ENCODE measurements at regions of chr19 and their contacts with region 1.

Region 1: GRCh38 chr19:10695401-10696398 is 5.5 kb upstream of the QTRT1 start:
- DNase-seq: peak; percentile 93
- ATAC-seq: peak; percentile 99
- H3K4me3 Mint-ChIP-seq: peak overlapping the region; percentile 62
- H3K27ac Mint-ChIP-seq: no peak overlapping the region
- H3K4me1 Mint-ChIP-seq: peaks cover 17% of the 10 kb centered on the region
- H3K27me3 Mint-ChIP-seq: peaks cover 4% of the 10 kb centered on the region
- CTCF ChIP-seq: no peak

Region 2: GRCh38 chr19:10433131-10433536 is 262.6 kb before region 1 on chr19:
- CTCF ChIA-PET with region 1: no interaction called
- POLR2A ChIA-PET with region 1: no interaction called
- intact Hi-C with region 1: no loop called
- DNase-seq: peak; percentile 55
- ATAC-seq: peak; percentile 9
- H3K4me3 Mint-ChIP-seq: peak overlapping the region; percentile 38
- H3K27ac Mint-ChIP-seq: peak overlapping the region; percentile 53
- H3K4me1 Mint-ChIP-seq: peaks cover 47% of the 10 kb centered on the region
- H3K27me3 Mint-ChIP-seq: peaks cover 29% of the 10 kb centered on the region
- CTCF ChIP-seq: no peak

Region 3: DNA sequence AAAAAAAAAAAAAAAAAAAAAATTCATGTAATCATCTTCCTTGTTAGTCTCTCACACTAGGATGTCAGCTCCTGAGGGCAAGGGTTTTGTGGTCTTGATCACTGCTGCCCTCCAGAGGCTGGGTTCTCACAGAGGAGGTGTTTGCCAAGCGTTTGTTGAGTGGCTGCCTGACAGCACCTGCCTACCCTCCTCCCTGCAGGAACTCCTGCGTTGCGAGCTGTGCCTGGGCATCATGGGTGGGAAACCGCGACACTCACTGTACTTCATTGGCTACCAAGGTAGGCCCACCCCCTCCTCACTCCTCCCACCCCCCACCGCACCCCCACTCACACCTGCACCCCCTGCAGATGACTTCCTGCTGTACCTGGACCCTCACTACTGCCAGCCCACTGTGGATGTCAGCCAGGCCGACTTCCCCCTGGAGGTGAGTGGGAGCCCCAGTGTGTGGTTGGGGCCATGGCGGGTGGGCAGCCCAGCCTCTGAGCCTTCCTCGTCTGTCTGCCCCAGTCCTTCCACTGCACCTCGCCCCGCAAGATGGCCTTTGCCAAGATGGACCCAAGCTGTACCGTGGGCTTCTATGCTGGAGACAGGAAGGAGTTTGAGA is 143.9 kb before region 1 on chr19:
- CTCF ChIA-PET with region 1: interaction called, 18 read pairs
- POLR2A ChIA-PET with region 1: no interaction called
- intact Hi-C with region 1: no loop called
- DNase-seq: peak; percentile 73
- ATAC-seq: peak; percentile 14
- H3K4me3 Mint-ChIP-seq: no peak overlapping the region
- H3K27ac Mint-ChIP-seq: peak overlapping the region; percentile 92
- H3K4me1 Mint-ChIP-seq: peaks cover 54% of the 10 kb centered on the region
- H3K27me3 Mint-ChIP-seq: no peaks in the 10 kb centered on the region
- CTCF ChIP-seq: no peak

Region 4: GRCh38 chr19:10644260-10645007 is 51.3 kb before region 1 on chr19:
- CTCF ChIA-PET with region 1: interaction called, 57 read pairs
- POLR2A ChIA-PET with region 1: interaction called, 5 read pairs
- intact Hi-C with region 1: no loop called
- DNase-seq: peak; percentile 90
- ATAC-seq: peak; percentile 90
- H3K4me3 Mint-ChIP-seq: no peak overlapping the region
- H3K27ac Mint-ChIP-seq: peak overlapping the region; percentile 90
- H3K4me1 Mint-ChIP-seq: peaks cover 47% of the 10 kb centered on the region
- H3K27me3 Mint-ChIP-seq: no peaks in the 10 kb centered on the region
- CTCF ChIP-seq: peak; percentile 92

Region 5: DNA sequence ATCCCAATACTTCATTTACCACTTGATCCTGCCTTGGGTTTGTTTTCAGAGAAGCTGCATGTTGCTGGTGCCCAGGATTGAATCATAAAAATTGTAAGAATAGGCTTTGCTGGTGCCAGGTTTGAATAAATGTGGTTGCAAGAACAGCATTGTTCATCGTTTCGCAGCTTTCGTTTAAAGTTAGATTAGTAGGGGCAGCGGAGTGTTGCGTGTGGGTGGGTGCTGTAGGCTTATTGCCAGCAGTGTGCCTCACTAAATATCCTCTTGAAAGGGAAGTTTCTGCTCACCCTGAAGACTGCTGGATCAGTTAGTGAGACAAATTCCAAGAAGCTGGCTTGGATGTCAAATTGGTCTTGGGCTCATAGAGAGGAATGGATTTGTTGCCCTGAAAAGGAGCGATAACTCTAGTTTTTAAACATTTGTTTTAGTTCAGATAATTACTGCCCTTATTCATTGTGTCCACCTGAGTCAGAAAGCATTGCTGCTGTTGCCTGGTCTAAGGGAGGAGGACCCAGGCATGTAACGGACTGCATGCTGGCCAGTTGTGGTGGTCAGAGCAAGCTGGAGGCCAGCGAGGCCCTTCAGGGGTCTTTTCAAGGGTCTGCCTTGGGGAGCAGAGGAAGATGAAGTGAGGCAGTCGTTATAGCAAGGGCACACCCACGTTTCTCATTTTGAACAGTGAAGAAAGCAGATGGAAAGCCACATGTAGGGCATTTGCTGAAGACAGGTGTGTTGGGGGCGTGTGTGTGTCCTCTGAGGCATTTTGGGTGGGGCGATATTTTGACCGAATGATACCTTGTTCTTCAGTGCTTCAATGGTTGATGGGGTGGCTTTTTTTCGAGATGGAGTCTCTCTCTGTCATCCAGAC is 33.1 kb before region 1 on chr19:
- CTCF ChIA-PET with region 1: interaction called, 14 read pairs
- POLR2A ChIA-PET with region 1: interaction called, 26 read pairs
- intact Hi-C with region 1: no loop called
- DNase-seq: peak; percentile 68
- ATAC-seq: peak; percentile 71
- H3K4me3 Mint-ChIP-seq: peak overlapping the region; percentile 21
- H3K27ac Mint-ChIP-seq: peak overlapping the region; percentile 74
- H3K4me1 Mint-ChIP-seq: peaks cover 53% of the 10 kb centered on the region
- H3K27me3 Mint-ChIP-seq: no peaks in the 10 kb centered on the region
- CTCF ChIP-seq: no peak

Region 6: GRCh38 chr19:10717356-10718204 is 21.9 kb after region 1 on chr19 and contains the start of gene DNM2:
- CTCF ChIA-PET with region 1: interaction called, 54 read pairs
- POLR2A ChIA-PET with region 1: interaction called, 3 read pairs
- intact Hi-C with region 1: no loop called
- DNase-seq: peak; percentile 98
- ATAC-seq: peak; percentile 91
- H3K4me3 Mint-ChIP-seq: peak within 1 kb of the TSS; percentile 96
- H3K27ac Mint-ChIP-seq: peak within 1 kb of the TSS; percentile 87
- H3K4me1 Mint-ChIP-seq: peaks cover 30% of the 10 kb centered on the region
- H3K27me3 Mint-ChIP-seq: no peaks in the 10 kb centered on the region
- CTCF ChIP-seq: peak; percentile 62
- total RNA-seq, gene DNM2: 151 to 153 TPM

Measured in activated CD8-positive, alpha-beta T cell treated with anti-CD3 and anti-CD28 coated beads for 36 hours (primary cell).